IMR-90 (cell line): ENCODE measurements at regions of chr1 and their contacts with region 1.

Region 1: GRCh38 chr1:94541175-94542087 is at the start of gene F3:
- DNase-seq: peak; percentile 91
- ATAC-seq: peak; percentile 77
- H3K4me3 ChIP-seq: peak within 1 kb of the TSS; percentile 92
- H3K27ac ChIP-seq: peak within 1 kb of the TSS; percentile 95
- H3K4me1 ChIP-seq: peaks cover 7% of the 10 kb centered on the region
- H3K27me3 ChIP-seq: no peaks in the 10 kb centered on the region
- CTCF ChIP-seq: peak; percentile 28; the same call in 1 of the 2 replicates
- POLR2A ChIP-seq: peak; percentile 95
- RAD21 ChIP-seq: peak; percentile 25; the same call in 1 of the 2 replicates
- total RNA-seq, gene F3: 75.6 and 102 TPM in 2 replicates

Region 2: GRCh38 chr1:93864175-93864574 is 677.3 kb before region 1 on chr1:
- CTCF ChIA-PET with region 1: no interaction called
- POLR2A ChIA-PET with region 1: no interaction called
- dilution Hi-C with region 1: no loop called
- in situ Hi-C with region 1: no loop called
- intact Hi-C with region 1: no loop called
- DNase-seq: no peak
- ATAC-seq: no peak
- H3K4me3 ChIP-seq: no peak overlapping the region
- H3K27ac ChIP-seq: no peak overlapping the region
- H3K4me1 ChIP-seq: no peaks in the 10 kb centered on the region
- H3K27me3 ChIP-seq: peaks cover 2% of the 10 kb centered on the region
- CTCF ChIP-seq: no peak
- POLR2A ChIP-seq: no peak
- RAD21 ChIP-seq: no peak

Region 3: DNA sequence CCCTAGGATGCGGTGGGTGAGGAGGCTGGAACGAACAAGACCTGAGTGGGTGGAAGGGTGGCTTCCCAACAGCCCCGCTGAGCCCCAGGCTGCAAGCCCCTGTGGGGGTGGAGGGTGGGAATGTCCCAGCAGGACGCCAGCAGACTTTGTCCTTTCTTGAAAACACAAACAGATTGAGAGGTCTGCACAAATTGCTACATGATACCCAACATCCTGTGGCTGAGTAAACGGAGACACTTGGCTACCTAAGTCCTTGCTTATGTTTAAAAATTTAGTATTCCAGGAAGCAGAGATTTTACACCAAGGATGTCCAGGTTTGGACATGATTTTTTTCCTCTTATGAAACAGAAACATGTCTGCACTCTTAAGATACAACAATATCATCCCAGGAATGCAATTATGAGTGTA is 11.9 kb after region 1 on chr1:
- CTCF ChIA-PET with region 1: interaction called, 4 read pairs
- POLR2A ChIA-PET with region 1: interaction called, 14 read pairs
- dilution Hi-C with region 1: no loop called
- in situ Hi-C with region 1: no loop called
- intact Hi-C with region 1: no loop called
- DNase-seq: peak; percentile 65
- ATAC-seq: peak; percentile 43
- H3K4me3 ChIP-seq: no peak overlapping the region
- H3K27ac ChIP-seq: peak overlapping the region; percentile 28
- H3K4me1 ChIP-seq: peaks cover 30% of the 10 kb centered on the region
- H3K27me3 ChIP-seq: no peaks in the 10 kb centered on the region
- CTCF ChIP-seq: no peak
- POLR2A ChIP-seq: no peak
- RAD21 ChIP-seq: no peak

Region 4: GRCh38 chr1:94591823-94592570 is 50.6 kb after region 1 on chr1:
- CTCF ChIA-PET with region 1: no interaction called
- POLR2A ChIA-PET with region 1: interaction called, 25 read pairs
- dilution Hi-C with region 1: no loop called
- in situ Hi-C with region 1: no loop called
- intact Hi-C with region 1: no loop called
- DNase-seq: no peak
- ATAC-seq: no peak
- H3K4me3 ChIP-seq: no peak overlapping the region
- H3K27ac ChIP-seq: no peak overlapping the region
- H3K4me1 ChIP-seq: peaks cover 14% of the 10 kb centered on the region
- H3K27me3 ChIP-seq: no peaks in the 10 kb centered on the region
- CTCF ChIP-seq: no peak
- POLR2A ChIP-seq: no peak
- RAD21 ChIP-seq: no peak

Region 5: DNA sequence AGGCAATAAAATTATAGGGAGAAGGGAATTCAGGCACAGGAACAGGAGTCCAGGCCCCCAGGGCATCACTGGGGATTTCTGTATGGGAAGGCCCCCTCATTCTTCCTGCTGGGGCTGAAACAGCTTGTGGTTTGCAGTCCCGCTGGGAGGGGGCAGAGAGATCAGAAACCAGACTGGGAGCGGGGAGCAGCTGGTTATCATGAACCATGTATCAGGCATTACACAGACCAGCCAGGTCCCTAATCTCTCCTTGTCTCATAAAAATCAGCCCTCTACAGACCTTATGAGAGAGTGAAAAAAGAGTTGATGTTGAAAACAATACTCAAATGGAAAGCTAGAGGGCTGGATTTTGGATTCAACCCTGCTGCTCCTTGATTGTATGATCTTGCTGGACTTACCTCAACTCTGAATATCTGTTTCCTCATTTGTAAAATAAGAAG is 93.6 kb after region 1 on chr1:
- CTCF ChIA-PET with region 1: interaction called, 5 read pairs
- POLR2A ChIA-PET with region 1: interaction called, 21 read pairs
- dilution Hi-C with region 1: no loop called
- in situ Hi-C with region 1: no loop called
- intact Hi-C with region 1: loop called (anchors 1 kb)
- DNase-seq: no peak
- ATAC-seq: no peak
- H3K4me3 ChIP-seq: no peak overlapping the region
- H3K27ac ChIP-seq: peak overlapping the region; percentile 22
- H3K4me1 ChIP-seq: peaks cover 8% of the 10 kb centered on the region
- H3K27me3 ChIP-seq: no peaks in the 10 kb centered on the region
- CTCF ChIP-seq: no peak
- POLR2A ChIP-seq: no peak
- RAD21 ChIP-seq: no peak

Region 6: GRCh38 chr1:94713472-94714141 is 172.2 kb after region 1 on chr1:
- CTCF ChIA-PET with region 1: no interaction called
- POLR2A ChIA-PET with region 1: interaction called, 20 read pairs
- dilution Hi-C with region 1: no loop called
- in situ Hi-C with region 1: no loop called
- intact Hi-C with region 1: no loop called
- DNase-seq: peak; percentile 99
- ATAC-seq: peak; percentile 88
- H3K4me3 ChIP-seq: no peak overlapping the region
- H3K27ac ChIP-seq: peak overlapping the region; percentile 81
- H3K4me1 ChIP-seq: peaks cover 23% of the 10 kb centered on the region
- H3K27me3 ChIP-seq: no peaks in the 10 kb centered on the region
- CTCF ChIP-seq: no peak
- POLR2A ChIP-seq: no peak
- RAD21 ChIP-seq: no peak

Region 7: DNA sequence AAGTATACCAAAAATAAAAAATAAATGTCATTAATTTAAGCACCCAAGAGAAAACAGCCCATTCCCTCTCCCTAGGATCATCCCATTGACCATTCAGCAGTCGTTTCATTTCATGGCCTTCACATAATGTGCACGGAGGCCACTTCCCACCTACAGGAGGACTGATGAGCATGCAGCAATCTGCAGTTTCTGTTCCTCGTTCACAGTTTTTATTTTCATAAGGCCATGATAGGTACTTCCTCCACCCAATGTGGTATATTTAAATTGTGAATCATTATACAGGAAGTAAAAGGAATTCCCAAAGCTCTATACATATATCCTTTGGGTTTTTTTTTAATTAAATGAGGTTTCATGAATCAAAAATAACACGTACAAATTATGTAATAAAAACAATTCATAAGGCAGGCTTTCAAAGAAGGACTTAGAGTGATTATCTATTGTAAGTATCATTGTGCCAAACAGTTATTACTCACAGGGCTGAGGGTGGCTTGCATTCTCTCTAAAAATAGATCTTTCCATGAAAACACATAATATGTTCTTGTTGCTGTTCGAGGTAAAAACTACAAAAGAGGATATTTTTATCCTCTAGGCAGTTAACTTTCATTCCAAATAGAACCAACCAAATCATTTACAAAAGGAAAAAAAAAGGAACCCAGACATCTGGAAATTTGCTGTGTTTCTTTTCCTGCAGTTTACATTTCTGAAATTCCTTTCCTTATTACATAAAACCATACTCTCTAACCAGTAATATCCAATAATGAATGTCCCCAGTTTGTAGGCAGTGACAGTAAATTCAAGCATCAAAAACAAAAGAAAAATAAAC is 251.3 kb after region 1 on chr1:
- CTCF ChIA-PET with region 1: no interaction called
- POLR2A ChIA-PET with region 1: interaction called, 7 read pairs
- dilution Hi-C with region 1: loop called (anchors 25 kb)
- in situ Hi-C with region 1: no loop called
- intact Hi-C with region 1: no loop called
- DNase-seq: peak; percentile 79
- ATAC-seq: peak; percentile 67
- H3K4me3 ChIP-seq: no peak overlapping the region
- H3K27ac ChIP-seq: peak overlapping the region; percentile 83
- H3K4me1 ChIP-seq: peaks cover 9% of the 10 kb centered on the region
- H3K27me3 ChIP-seq: no peaks in the 10 kb centered on the region
- CTCF ChIP-seq: 0 out of 2 replicates have a peak, but pooled peaks have one; percentile 17
- POLR2A ChIP-seq: no peak
- RAD21 ChIP-seq: peak; percentile 32